ENCODE measurements at regions of chr19 and their contacts with region 1.

Region 1: GRCh38 chr19:18469069-18469846 is 31.3 kb upstream of the ISYNA1 start:
- DNase-seq: peak; percentile 53 to 81 (median 64)
- H3K4me3 ChIP-seq: no peak overlapping the region
- H3K27ac ChIP-seq: peak overlapping the region in 1 of 5 donors; percentile 3
- H3K4me1 ChIP-seq: peaks cover 23 to 54% of the 10 kb centered on the region in 2 donors
- H3K27me3 ChIP-seq: no peaks in the 10 kb centered on the region
- CTCF ChIP-seq: peak; percentile 52 to 80 (median 70)
- POLR2A ChIP-seq: no peak

Region 2: GRCh38 chr19:18233224-18233825 is 235.9 kb before region 1 on chr19:
- intact Hi-C with region 1: no loop called
- DNase-seq: peak in 5 of 7 donors; percentile 50 to 71 (median 60)
- H3K4me3 ChIP-seq: no peak overlapping the region
- H3K27ac ChIP-seq: no peak overlapping the region
- H3K4me1 ChIP-seq: no peaks in the 10 kb centered on the region
- H3K27me3 ChIP-seq: peaks cover 17% of the 10 kb centered on the region
- CTCF ChIP-seq: no peak
- POLR2A ChIP-seq: no peak

Region 3: DNA sequence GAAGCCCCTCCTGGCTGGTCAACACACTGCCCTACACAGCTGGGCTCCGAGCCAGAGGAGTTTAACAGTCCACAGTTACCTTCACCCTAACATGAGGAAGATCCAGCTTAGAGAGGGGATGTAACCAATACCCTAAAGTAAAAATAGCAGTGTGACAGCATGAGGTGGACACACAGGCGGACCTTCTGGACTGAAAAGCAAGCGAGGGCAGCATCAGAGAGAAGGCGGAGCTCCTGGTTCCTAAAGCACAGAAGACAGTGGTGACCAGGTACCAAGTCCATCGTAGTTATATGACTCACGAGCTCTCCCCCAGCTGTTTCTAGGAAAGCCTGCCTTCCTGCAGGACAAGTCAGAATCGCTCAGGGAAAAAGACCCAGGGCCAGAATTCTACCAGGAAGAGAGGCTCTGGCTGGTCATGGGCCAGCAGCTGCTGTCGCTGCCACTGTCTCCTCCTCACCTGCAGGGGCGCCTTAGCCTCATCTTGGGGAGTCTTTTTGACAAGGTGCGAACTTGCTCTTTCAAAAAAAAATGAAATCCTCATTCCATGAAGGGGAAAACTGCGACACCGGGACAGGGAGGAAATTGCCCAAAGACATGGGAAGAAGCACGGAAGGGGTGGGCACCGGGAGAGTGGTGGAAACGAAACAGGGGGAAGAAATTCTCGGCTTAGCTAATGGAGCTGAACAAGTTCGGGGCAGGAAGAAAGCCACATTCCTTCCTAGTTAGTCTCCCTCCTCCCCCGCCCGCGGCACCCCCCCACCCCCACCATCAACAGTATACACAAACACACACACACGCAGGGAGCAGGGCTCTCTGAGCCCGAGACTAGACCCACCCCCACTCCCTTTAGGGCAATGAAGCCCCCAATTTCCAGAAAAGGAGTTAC is 50.9 kb after region 1 on chr19:
- intact Hi-C with region 1: loop called (anchors 5 to 10 kb)
- DNase-seq: peak in 6 of 7 donors; percentile 75 to 85 (median 77)
- H3K4me3 ChIP-seq: peak overlapping the region in 3 of 4 donors; percentile 32 to 94 (median 87)
- H3K27ac ChIP-seq: peak overlapping the region; percentile 54 to 96 (median 88)
- H3K4me1 ChIP-seq: peaks cover 22 to 48% of the 10 kb centered on the region in 2 donors
- H3K27me3 ChIP-seq: no peaks in the 10 kb centered on the region
- CTCF ChIP-seq: peak; percentile 35 to 72 (median 62)
- POLR2A ChIP-seq: peak in 1 of 2 donors; percentile 33

Region 4: DNA sequence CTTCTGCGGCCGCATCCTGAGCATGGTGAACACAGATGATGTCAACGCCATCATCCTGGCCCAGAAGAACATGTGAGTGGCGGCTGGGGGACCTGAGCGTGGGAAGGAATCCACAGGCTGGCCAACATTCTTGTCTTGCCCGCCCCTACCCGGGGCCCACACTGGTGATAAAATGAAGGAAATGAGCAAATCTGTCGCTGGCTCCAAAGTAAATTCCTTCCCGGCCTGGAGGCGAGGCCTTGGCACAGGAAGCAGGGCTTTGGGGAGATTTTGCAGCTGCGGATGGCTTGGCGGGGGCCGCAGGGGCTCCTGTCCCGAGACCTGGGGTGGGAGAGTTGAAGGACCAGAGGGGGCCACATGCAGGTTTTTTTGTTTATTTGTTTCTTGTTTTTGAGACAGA is 92.8 kb after region 1 on chr19:
- intact Hi-C with region 1: loop called in 1 of 2 experiments (anchors 10 kb)
- DNase-seq: peak in 4 of 7 donors; percentile 33 to 72 (median 42)
- H3K4me3 ChIP-seq: no peak overlapping the region
- H3K27ac ChIP-seq: peak overlapping the region in 4 of 5 donors; percentile 26 to 92 (median 69)
- H3K4me1 ChIP-seq: peaks cover 6 to 12% of the 10 kb centered on the region in 2 donors
- H3K27me3 ChIP-seq: no peaks in the 10 kb centered on the region
- CTCF ChIP-seq: no peak
- POLR2A ChIP-seq: no peak

Region 5: GRCh38 chr19:18574691-18575291 is 105.5 kb after region 1 on chr19:
- intact Hi-C with region 1: loop called (anchors 5 to 10 kb)
- DNase-seq: no peak
- H3K4me3 ChIP-seq: no peak overlapping the region
- H3K27ac ChIP-seq: no peak overlapping the region
- H3K4me1 ChIP-seq: peaks cover 14 to 24% of the 10 kb centered on the region in 2 donors
- H3K27me3 ChIP-seq: no peaks in the 10 kb centered on the region
- CTCF ChIP-seq: no peak
- POLR2A ChIP-seq: no peak

Region 6: GRCh38 chr19:18919900-18920214 is 450.6 kb after region 1 on chr19:
- intact Hi-C with region 1: loop called in 1 of 2 experiments (anchors 10 kb)
- DNase-seq: no peak
- H3K4me3 ChIP-seq: peak overlapping the region; percentile 30 to 80 (median 75)
- H3K27ac ChIP-seq: peak overlapping the region in 4 of 5 donors; percentile 3 to 73 (median 68)
- H3K4me1 ChIP-seq: peaks cover 21 to 32% of the 10 kb centered on the region in 2 donors
- H3K27me3 ChIP-seq: no peaks in the 10 kb centered on the region
- CTCF ChIP-seq: no peak
- POLR2A ChIP-seq: no peak